Heart left ventricle (tissue), 16 donors: ENCODE measurements at regions of chr6 and their contacts with region 1.

Region 1: GRCh38 chr6:24494821-24495795 is at the start of gene ALDH5A1:
- DNase-seq: peak; percentile 73 to 87 (median 81)
- ATAC-seq: peak; percentile 82 to 93 (median 86)
- H3K4me3 ChIP-seq: peak within 1 kb of the TSS; percentile 58 to 96 (median 71)
- H3K27ac ChIP-seq: peak within 1 kb of the TSS; percentile 75 to 92 (median 86)
- H3K4me1 ChIP-seq: peaks cover 0 to 22% (median 8%) of the 10 kb centered on the region in 12 donors
- H3K27me3 ChIP-seq: peaks cover 0 to 5% (median 0%) of the 10 kb centered on the region in 9 donors
- CTCF ChIP-seq: peak in 10 of 12 donors; percentile 3 to 51 (median 18)
- POLR2A ChIP-seq: no peak
- total RNA-seq, gene ALDH5A1: 16.6 to 35.5 (median 20.6) TPM

Region 2: DNA sequence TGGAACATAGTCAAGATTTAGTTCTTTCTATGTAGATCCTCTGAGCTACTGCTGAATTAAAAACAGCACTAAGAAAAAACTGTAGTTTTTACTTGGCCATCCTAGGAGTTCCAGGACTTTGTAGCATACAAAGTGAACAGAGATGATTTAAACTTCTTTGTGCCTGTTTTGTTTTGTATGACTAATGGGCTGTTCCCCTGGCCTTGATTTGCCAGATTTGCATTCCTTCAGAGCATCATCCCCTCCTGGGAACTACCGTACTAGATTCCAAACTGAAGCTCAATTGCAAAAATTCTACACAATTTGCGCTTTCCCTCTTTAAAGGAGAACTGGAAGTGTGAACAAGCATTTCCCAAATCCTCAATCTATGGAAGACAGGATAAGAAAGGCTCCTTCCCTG is 194.9 kb after region 1 on chr6:
- intact Hi-C with region 1: loop called in 1 of 10 experiments (anchors 10 kb)
- DNase-seq: no peak
- ATAC-seq: peak in 1 of 4 donors; percentile 68
- H3K4me3 ChIP-seq: no peak overlapping the region
- H3K27ac ChIP-seq: no peak overlapping the region
- H3K4me1 ChIP-seq: peaks cover 0 to 26% (median 7%) of the 10 kb centered on the region in 12 donors
- H3K27me3 ChIP-seq: no peaks in the 10 kb centered on the region
- CTCF ChIP-seq: no peak
- POLR2A ChIP-seq: no peak